ENCODE measurements at regions of chr1 and their contacts with region 1.

Region 1: GRCh38 chr1:204989266-204990058 is 53.5 kb upstream of the CNTN2 start:
- DNase-seq: peak in 1 of 2 donors; percentile 39
- H3K4me3 ChIP-seq: no peak overlapping the region
- H3K27ac ChIP-seq: no peak overlapping the region
- H3K4me1 ChIP-seq: no peaks in the 10 kb centered on the region
- H3K27me3 ChIP-seq: no peaks in the 10 kb centered on the region
- CTCF ChIP-seq: peak; percentile 71 to 72

Region 2: DNA sequence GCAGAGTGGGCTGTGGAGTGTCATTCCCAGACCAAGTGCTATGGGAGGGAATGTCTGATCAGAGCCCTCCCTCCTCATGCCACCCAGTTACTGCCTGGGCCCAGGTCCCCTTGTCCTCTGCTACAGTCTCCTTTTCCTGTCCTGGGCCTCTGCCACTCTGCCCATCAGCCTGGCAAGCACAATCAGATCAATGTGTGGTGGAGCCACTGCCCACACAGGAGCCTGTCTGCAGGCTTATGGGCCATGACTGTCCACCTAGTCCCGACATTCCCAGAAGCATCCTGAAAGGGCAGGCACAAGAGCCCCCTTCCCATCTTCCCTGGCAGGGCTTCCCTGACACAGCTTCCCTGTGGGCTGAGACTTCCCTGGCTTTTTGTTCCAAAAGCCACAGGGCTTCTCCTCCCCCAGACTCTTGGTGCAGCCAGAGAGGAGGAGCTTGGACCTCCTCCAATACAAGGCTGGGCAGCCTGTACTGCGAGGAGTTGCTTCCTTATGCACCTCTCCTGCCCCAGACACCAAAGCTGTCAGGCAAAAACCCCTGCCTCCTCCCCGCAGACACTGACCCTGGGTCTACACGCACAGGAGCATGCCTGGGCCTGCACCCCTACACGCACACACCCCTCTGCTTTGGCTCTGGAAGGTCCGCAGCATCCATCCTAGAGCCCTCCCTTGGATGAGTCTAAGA is 24.4 kb after region 1 on chr1:
- intact Hi-C with region 1: no loop called
- DNase-seq: no peak
- H3K4me3 ChIP-seq: no peak overlapping the region
- H3K27ac ChIP-seq: no peak overlapping the region
- H3K4me1 ChIP-seq: peaks cover 0 to 8% (median 0%) of the 10 kb centered on the region in 4 donors
- H3K27me3 ChIP-seq: no peaks in the 10 kb centered on the region
- CTCF ChIP-seq: no peak

Region 3: GRCh38 chr1:205061665-205062069 is 72.2 kb after region 1 on chr1:
- intact Hi-C with region 1: loop called (anchors 5 kb)
- DNase-seq: peak; percentile 56 to 75
- H3K4me3 ChIP-seq: no peak overlapping the region
- H3K27ac ChIP-seq: no peak overlapping the region
- H3K4me1 ChIP-seq: peaks cover 0 to 7% (median 2%) of the 10 kb centered on the region in 4 donors
- H3K27me3 ChIP-seq: no peaks in the 10 kb centered on the region
- CTCF ChIP-seq: peak; percentile 75 to 77

Region 4: GRCh38 chr1:205088341-205088740 is 98.9 kb after region 1 on chr1:
- intact Hi-C with region 1: no loop called
- DNase-seq: no peak
- H3K4me3 ChIP-seq: no peak overlapping the region
- H3K27ac ChIP-seq: no peak overlapping the region
- H3K4me1 ChIP-seq: no peaks in the 10 kb centered on the region
- H3K27me3 ChIP-seq: no peaks in the 10 kb centered on the region
- CTCF ChIP-seq: no peak

Measured in tibial artery (tissue), 4 donors.